Calu3 (cell line): ENCODE measurements at regions of chr4 and their contacts with region 1.

Region 1: DNA sequence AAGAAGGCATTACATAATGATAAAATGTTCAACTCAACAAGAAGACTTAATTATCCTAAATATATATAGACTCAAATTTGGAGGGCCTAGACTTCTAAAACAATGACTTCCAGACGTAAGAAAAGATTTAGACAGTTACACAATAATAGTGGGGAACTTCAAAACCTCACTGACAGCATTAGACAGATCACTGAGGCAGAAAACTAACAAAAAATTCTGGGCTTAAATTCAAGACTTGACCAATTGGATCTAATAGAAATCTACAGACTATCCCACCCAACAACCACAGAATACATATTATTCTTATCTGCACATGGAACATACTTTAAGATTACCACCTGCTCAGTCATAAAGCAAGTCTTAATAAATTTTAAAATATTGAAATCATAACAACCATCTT is 93.3 kb upstream of the ARSJ start:
- DNase-seq: no peak
- H3K4me3 Mint-ChIP-seq: no peak overlapping the region
- H3K27ac Mint-ChIP-seq: no peak overlapping the region
- H3K4me1 Mint-ChIP-seq: peaks cover 12% of the 10 kb centered on the region
- H3K27me3 Mint-ChIP-seq: no peaks in the 10 kb centered on the region
- CTCF ChIP-seq: no peak

Region 2: GRCh38 chr4:113901994-113902787 is 170.6 kb before region 1 on chr4:
- CTCF ChIA-PET with region 1: no interaction called
- intact Hi-C with region 1: loop called (anchors 2 kb)
- DNase-seq: peak; percentile 74
- H3K4me3 Mint-ChIP-seq: peak overlapping the region; percentile 51
- H3K27ac Mint-ChIP-seq: peak overlapping the region; percentile 85
- H3K4me1 Mint-ChIP-seq: peaks cover 19% of the 10 kb centered on the region
- H3K27me3 Mint-ChIP-seq: no peaks in the 10 kb centered on the region
- CTCF ChIP-seq: peak; percentile 37

Region 3: DNA sequence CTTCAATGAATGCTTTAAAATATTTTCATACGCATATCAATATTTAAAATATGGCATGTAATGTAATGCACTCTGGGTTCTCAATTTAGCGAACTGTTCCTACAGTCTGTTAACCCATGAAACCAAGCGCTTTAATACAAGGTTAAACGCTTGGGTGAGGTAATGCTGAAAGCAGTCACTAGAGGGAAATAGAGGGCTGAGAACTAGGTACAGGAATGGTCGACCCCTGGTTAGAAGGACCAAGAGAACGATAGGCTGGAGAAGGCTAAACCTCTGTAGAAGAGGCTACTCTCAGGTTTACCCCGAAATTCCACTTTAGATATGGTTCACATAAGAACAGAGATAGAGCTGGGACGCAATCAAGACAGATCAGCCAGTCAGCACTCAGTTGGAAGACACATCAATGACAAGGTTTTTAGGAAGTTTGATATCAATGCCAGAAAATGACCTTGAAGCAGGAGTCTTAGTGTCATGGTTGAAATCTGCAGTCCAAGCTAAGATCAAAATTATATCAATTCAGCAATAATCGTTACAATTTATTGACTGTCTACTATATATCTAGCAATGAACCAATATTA is 120.2 kb before region 1 on chr4:
- CTCF ChIA-PET with region 1: interaction called, 8 read pairs
- intact Hi-C with region 1: loop called (anchors 1 kb)
- DNase-seq: peak; percentile 48
- H3K4me3 Mint-ChIP-seq: no peak overlapping the region
- H3K27ac Mint-ChIP-seq: no peak overlapping the region
- H3K4me1 Mint-ChIP-seq: peaks cover 32% of the 10 kb centered on the region
- H3K27me3 Mint-ChIP-seq: no peaks in the 10 kb centered on the region
- CTCF ChIP-seq: peak; percentile 73